ENCODE measurements at regions of chr7 and their contacts with region 1.

Region 1: GRCh38 chr7:111735661-111736551 is 173.6 kb upstream of the IMMP2L start:
- DNase-seq: no peak
- ATAC-seq: peak; percentile 84
- H3K4me3 ChIP-seq: no peak overlapping the region
- H3K27ac ChIP-seq: no peak overlapping the region
- H3K4me1 ChIP-seq: peaks cover 0 to 1% of the 10 kb centered on the region in 2 donors
- H3K27me3 ChIP-seq: no peaks in the 10 kb centered on the region

Region 2: DNA sequence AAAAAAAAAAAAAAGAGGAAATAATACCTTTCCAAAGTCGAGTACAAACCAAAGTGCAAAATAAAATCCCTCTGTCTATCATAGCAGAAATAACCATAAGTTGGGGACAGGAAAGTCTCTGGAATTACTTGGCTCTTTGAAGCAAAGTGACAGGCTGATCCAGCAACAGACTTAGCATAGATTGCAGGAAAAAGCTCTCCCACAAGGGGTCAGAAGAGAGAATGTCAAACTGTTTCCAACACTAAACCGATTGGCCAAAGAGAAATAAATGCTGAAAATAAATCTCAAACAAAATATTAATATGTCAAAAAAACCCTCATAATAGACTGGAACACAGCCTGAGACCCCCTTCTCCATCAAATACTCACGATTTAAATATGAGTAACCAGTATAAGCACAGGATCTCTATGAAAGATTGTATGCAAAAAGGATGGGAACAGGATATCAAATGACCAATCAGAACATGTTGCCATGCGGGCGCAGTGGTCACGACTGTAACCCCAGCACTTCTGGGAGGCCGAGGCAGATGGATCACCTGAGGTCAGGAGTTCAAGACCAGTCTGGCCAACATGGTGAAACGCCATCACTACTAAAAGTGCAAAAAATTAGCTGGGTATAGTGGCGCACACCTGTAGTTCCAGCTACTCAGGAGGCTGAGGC is 1645.7 kb before region 1 on chr7:
- intact Hi-C with region 1: loop called in 1 of 2 experiments (anchors 5 kb)
- DNase-seq: no peak
- ATAC-seq: no peak
- H3K4me3 ChIP-seq: no peak overlapping the region
- H3K27ac ChIP-seq: no peak overlapping the region
- H3K4me1 ChIP-seq: no peaks in the 10 kb centered on the region
- H3K27me3 ChIP-seq: no peaks in the 10 kb centered on the region

Region 3: DNA sequence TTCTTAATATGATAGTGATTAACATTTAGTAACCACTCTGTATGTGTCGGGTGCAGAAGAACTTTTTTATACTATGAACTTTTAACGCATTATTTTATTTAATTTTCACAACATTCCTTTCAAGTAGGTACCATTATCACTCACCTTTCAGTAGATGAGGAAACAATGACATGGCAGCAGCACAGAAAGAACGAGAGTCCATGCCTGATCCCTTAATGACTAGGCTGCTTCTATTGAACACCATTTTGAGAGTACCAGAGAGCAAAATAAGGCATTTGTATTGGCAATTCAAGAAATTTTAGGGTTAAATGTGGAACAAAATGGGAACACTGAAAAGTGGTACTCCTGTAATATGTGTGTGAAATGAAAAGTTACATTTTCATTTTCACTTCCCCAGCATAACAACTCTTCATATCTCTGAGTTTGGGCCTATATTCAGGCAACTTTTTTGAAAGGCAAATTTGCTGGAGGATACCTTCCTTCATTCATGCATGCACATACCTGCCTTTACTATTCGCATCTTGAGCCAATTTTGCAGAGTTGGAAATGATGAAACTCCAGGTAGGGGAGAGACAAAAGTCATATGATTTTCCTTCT is 632.1 kb before region 1 on chr7:
- intact Hi-C with region 1: loop called in 1 of 2 experiments (anchors 10 kb)
- DNase-seq: no peak
- ATAC-seq: no peak
- H3K4me3 ChIP-seq: no peak overlapping the region
- H3K27ac ChIP-seq: no peak overlapping the region
- H3K4me1 ChIP-seq: no peaks in the 10 kb centered on the region
- H3K27me3 ChIP-seq: no peaks in the 10 kb centered on the region

Region 4: DNA sequence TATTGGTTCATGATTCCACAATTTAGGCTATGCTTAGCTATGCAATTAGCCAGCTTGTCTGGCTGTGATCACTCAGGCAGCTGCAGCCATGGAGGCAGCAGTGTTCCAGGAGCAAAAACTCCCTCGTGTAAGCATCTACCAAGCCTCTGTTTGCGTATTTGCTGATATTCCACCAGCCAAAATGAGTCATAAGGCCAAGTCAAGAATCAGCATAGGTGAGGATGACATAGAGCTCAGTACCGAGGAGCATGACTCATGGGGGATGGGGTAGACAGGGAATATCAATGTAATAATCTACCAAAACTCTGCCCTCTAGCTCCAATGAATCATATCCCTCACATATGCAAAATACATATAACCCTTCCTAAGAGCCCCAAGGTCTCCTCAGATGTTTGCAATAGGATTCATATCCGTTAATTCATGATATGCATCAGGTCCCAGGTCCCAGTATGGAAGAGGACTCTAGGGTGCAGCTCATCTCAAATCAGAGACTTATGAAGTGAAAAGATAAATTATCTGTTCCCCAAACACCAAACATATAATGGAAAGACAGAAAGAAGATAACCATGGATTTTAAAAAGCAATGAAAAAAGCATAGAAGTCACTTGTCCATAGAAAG is 236.8 kb before region 1 on chr7:
- intact Hi-C with region 1: loop called in 1 of 2 experiments (anchors 10 kb)
- DNase-seq: no peak
- ATAC-seq: no peak
- H3K4me3 ChIP-seq: no peak overlapping the region
- H3K27ac ChIP-seq: no peak overlapping the region
- H3K4me1 ChIP-seq: peaks cover 0 to 4% of the 10 kb centered on the region in 2 donors
- H3K27me3 ChIP-seq: no peaks in the 10 kb centered on the region

Region 5: DNA sequence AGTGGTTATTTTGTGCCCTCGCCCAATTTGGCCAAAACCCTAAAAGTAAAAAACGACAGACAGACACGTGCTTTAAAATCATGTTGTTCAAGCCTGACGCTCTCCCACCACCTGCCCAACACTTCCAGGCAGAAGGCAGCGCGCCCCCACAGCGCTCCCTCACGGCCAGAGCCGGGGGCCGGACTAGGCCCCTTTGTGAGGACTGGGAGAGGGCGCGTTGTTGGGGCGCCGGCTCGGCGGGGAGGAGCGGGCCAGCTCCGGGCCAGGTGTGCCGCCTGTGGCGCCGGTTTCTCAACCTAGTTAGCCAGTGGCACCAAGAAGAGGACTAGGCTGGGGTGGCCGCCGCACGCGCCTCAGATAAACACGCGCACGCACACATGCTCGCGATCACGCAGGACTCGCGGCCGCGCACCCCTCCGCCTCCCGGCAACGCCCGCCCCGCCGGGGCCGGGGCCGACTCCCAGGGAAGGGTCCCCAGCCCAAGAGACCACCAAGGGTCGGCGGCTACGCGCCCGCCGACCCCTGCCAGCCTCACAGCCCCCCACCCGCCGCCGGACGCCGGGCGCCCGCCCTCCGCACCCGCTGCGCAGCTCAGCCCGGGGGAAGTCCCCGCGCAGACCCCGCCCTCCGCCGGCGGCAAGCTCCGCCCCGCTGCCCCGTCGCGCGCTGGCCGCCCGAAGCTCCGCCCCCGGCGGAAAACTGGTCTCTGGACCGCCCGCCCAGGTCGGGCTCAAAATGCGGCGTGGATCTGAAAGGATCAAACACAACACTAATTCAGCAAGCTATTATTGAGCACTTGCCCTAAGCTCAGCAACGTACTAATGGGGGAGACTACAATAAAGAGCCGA is 173.8 kb before region 1 on chr7 and contains the start of gene IMMP2L:
- intact Hi-C with region 1: loop called in 1 of 2 experiments (anchors 10 kb)
- DNase-seq: peak; percentile 92 to 97
- ATAC-seq: peak; percentile 99
- H3K4me3 ChIP-seq: peak within 1 kb of the TSS; percentile 71 to 76
- H3K27ac ChIP-seq: peak within 1 kb of the TSS in 1 of 2 donors; percentile 10
- H3K4me1 ChIP-seq: peaks cover 1 to 4% of the 10 kb centered on the region in 2 donors
- H3K27me3 ChIP-seq: no peaks in the 10 kb centered on the region
- total RNA-seq, gene IMMP2L: 26.9 to 32.9 TPM

Measured in aorta (tissue), 5 donors.